ENCODE measurements at regions of chr2 and their contacts with region 1.

Region 1: DNA sequence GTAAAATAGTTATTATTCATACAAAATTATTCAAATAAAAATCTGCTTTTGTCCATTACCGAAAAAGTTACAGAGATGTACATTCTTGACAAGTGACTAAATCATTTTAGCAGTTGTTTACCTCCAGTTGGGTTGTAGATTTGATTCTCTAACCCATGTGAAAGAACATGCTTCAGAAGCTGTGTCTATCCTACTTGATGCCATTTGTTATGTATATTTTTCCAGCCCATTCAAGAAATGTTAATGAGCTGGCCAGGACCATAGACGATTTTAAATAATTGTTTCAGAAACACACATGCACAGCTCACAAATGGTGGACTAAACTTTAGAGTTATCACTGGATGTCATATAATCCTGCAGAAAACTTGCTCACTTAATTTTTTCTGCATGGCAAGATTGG is 391.1 kb upstream of the REG3G start:
- DNase-seq: no peak

Region 2: DNA sequence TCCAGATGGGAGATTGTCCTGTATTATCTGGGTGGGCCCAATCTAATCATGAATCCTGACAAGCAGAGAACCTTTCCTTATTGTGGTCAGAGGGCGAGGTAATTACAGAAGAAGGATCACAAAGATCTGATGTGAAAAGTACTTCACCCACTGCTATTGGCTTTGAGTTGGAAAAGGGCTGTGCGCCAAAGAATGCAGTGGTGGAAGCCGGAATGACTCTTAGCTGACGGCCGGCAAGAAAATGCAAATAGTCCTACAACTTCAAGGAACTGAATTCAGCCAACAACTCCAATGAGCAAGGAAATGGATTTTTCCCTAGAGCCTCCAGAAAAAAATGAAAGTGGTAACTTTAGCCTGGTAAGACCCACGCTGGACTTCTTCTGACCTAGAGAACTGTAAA is 945.8 kb after region 1 on chr2:
- intact Hi-C with region 1: loop called in 1 of 2 experiments (anchors 5 kb)
- DNase-seq: no peak